Cardiac septum (tissue), 1 donor: ENCODE measurements at regions of chr19 and their contacts with region 1.

Region 1: GRCh38 chr19:37466798-37467607 is at the start of gene ZNF569:
- DNase-seq: peak; percentile 94
- total RNA-seq, gene ZNF569: 5.9 TPM

Region 2: GRCh38 chr19:36687214-36688056 is 779.6 kb before region 1 on chr19 and contains the start of gene ZNF567:
- intact Hi-C with region 1: loop called (anchors 5 kb)
- DNase-seq: peak; percentile 98
- total RNA-seq, gene ZNF567: 3.0 TPM

Region 3: GRCh38 chr19:36973021-36973843 is 493.8 kb before region 1 on chr19:
- intact Hi-C with region 1: loop called (anchors 10 kb)
- DNase-seq: peak; percentile 91

Region 4: GRCh38 chr19:37217855-37218591 is 249.0 kb before region 1 on chr19 and contains the start of gene ZNF383:
- intact Hi-C with region 1: loop called (anchors 5 kb)
- DNase-seq: peak; percentile 92
- total RNA-seq, gene ZNF383: 9.2 TPM

Region 5: DNA sequence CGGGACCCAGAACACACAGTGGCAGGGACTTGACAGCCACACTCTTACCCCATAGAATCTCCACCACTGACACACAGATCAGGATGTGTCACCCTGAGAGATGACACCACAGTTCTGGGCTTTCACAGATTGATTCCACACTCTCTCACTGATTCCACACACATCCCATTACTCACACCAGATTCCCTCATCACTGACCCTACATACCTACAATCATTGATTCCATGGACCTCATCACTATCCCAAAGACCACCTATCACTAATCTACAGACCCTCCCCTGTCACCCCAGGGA is 153.7 kb before region 1 on chr19:
- intact Hi-C with region 1: no loop called
- DNase-seq: no peak

Region 6: GRCh38 chr19:37370880-37371661 is 95.9 kb before region 1 on chr19 and contains the start of gene ZNF527:
- intact Hi-C with region 1: loop called (anchors 2 kb)
- DNase-seq: peak; percentile 98
- total RNA-seq, gene ZNF527: 6.7 TPM

Region 7: DNA sequence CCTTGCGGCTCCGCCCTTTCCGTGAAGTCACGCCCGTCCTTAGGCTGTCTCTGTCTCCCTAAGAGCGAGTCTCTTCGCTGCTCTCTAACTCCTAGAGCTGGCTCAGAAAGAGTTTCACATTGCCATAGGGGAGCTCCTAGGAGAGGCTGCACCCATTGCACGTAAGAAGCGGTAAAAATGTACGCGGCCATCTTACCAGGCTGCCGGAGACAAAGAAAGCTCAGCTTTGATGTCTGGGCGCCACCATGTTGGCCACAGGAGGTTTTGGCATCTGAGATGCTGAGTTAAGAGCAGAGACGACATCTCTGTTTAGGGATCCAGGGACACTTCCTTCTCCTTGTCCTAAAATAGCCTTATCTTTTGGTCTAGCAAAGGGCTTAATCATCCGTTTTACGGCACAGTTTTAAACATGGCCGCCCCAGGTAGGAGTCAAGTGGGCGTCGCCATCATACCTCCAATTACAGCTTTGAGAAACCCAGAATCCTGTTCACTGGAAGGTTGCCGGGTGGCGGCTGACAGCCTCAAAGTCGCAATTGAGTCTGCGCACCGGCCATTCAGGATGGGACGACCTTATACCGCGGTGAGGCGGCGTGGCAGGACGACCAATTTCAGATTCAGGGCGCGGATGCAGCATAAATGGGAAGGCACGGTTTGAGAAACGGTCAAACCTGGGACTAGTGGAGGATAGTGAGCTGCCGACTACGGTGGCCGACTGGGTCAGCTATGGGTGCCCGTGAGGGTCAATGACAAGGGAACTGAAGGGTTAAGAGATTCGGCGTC is 39.6 kb after region 1 on chr19 and contains the start of gene ZNF793:
- intact Hi-C with region 1: loop called (anchors 1 kb)
- DNase-seq: peak; percentile 90
- total RNA-seq, gene ZNF793: 8.3 TPM

Region 8: GRCh38 chr19:37572203-37572602 is 105.2 kb after region 1 on chr19:
- intact Hi-C with region 1: no loop called
- DNase-seq: no peak

Region 9: GRCh38 chr19:37594304-37594981 is 127.4 kb after region 1 on chr19 and contains the starts of genes ZNF540 and ZNF571:
- intact Hi-C with region 1: loop called (anchors 2 kb)
- DNase-seq: peak; percentile 96
- total RNA-seq, gene ZNF540: 4.5 TPM
- total RNA-seq, gene ZNF571: 4.4 TPM